ENCODE measurements at regions of chr2 and their contacts with region 1.

Region 1: GRCh38 chr2:156400706-156401678 is 35.2 kb upstream of the GPD2 start:
- DNase-seq: peak; percentile 67 to 93 (median 77)
- ATAC-seq: peak; percentile 81
- H3K4me3 ChIP-seq: peak overlapping the region; percentile 88
- H3K4me3 Mint-ChIP-seq: peak overlapping the region; percentile 92
- H3K27ac ChIP-seq: peak overlapping the region; percentile 87 to 90
- H3K27ac Mint-ChIP-seq: peak overlapping the region; percentile 99
- H3K4me1 ChIP-seq: peaks cover 18% of the 10 kb centered on the region
- H3K4me1 Mint-ChIP-seq: peaks cover 28% of the 10 kb centered on the region
- H3K27me3 ChIP-seq: no peaks in the 10 kb centered on the region
- H3K27me3 Mint-ChIP-seq: peaks cover 11% of the 10 kb centered on the region
- CTCF ChIP-seq: no peak

Region 2: DNA sequence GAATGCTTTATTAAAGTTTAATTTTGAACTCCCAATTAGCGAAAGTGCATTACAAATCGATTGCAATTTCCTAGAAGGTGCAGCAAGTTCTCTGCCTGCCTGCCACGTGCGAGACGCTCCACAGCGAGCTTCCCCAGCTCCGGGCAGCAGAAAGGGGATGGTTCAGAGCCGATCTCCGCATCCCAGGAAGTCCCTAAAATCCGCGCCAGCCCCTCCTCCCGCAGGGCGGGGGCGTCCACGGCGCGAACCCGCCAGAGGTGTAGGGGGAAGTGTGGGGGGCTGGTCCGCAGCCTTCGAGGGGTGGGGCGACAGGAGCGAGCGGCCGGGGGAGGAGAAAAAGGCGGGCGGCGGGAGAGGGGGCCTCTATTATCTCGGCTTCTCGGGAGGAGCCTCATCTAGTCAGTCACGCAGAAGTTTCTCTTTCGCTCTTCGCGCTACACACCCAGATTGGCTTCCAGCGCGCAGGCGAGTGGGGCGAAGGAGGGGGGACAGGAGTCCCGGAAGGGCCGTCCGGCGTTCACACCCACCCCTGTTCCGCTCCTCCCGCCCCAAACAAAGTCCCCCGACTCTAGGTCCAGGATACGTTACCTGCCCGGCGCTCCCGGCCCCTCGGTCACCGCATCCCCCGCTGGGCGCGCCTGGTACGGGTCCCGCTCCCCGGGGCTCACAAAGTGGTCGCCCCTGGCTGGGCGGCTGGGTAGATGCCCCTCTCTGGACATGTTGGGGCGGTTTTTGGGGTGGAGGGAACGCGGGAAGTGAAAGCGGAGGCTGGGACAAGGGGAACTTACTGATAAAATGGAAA is 59.3 kb before region 1 on chr2:
- CTCF ChIA-PET with region 1: no interaction called
- POLR2A ChIA-PET with region 1: interaction called, 107 read pairs
- intact Hi-C with region 1: loop called (anchors 1 to 2 kb)
- DNase-seq: peak; percentile 72 to 95 (median 81)
- ATAC-seq: peak; percentile 74
- H3K4me3 ChIP-seq: peak overlapping the region; percentile 87
- H3K4me3 Mint-ChIP-seq: peak overlapping the region; percentile 99
- H3K27ac ChIP-seq: peak overlapping the region; percentile 99
- H3K27ac Mint-ChIP-seq: peak overlapping the region; percentile 98
- H3K4me1 ChIP-seq: peaks cover 9% of the 10 kb centered on the region
- H3K4me1 Mint-ChIP-seq: peaks cover 49% of the 10 kb centered on the region
- H3K27me3 ChIP-seq: no peaks in the 10 kb centered on the region
- H3K27me3 Mint-ChIP-seq: no peaks in the 10 kb centered on the region
- CTCF ChIP-seq: no peak

Region 3: GRCh38 chr2:156435715-156436496 is 34.9 kb after region 1 on chr2 and contains the start of gene GPD2:
- CTCF ChIA-PET with region 1: no interaction called
- POLR2A ChIA-PET with region 1: interaction called, 18 read pairs
- intact Hi-C with region 1: loop called (anchors 1 to 2 kb)
- DNase-seq: peak; percentile 25 to 77 (median 46)
- ATAC-seq: peak; percentile 63
- H3K4me3 ChIP-seq: peak within 1 kb of the TSS; percentile 80
- H3K4me3 Mint-ChIP-seq: peak within 1 kb of the TSS; percentile 96
- H3K27ac ChIP-seq: peak within 1 kb of the TSS; percentile 33 to 69
- H3K27ac Mint-ChIP-seq: peak within 1 kb of the TSS; percentile 95
- H3K4me1 ChIP-seq: peaks cover 28% of the 10 kb centered on the region
- H3K4me1 Mint-ChIP-seq: peaks cover 33% of the 10 kb centered on the region
- H3K27me3 ChIP-seq: no peaks in the 10 kb centered on the region
- H3K27me3 Mint-ChIP-seq: no peaks in the 10 kb centered on the region
- CTCF ChIP-seq: no peak
- total RNA-seq, gene GPD2: 6.2 to 6.7 TPM

Region 4: DNA sequence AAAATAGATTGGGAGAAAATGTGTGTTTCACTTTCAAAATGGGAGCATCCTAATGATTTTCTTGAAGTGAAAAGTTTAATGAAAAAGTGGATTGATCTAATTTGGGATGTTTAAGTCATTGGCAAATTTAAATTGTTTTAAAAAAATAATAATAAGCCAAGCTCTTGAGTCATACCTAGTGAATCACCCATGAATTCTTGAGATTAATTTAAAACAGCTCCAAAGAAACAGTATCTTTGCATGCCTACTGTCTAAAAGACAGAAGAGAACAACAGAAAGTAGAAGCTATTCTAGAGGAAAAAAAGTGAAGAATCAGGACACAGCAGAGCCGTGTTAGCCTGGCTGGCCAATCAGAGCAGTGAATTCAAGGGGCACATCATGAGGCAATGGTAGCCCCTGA is 1220.0 kb after region 1 on chr2:
- CTCF ChIA-PET with region 1: no interaction called
- POLR2A ChIA-PET with region 1: no interaction called
- intact Hi-C with region 1: loop called in 1 of 2 experiments (anchors 5 kb)
- DNase-seq: no peak
- ATAC-seq: no peak
- H3K4me3 ChIP-seq: no peak overlapping the region
- H3K4me3 Mint-ChIP-seq: no peak overlapping the region
- H3K27ac ChIP-seq: no peak overlapping the region
- H3K27ac Mint-ChIP-seq: no peak overlapping the region
- H3K4me1 ChIP-seq: peaks cover 8% of the 10 kb centered on the region
- H3K4me1 Mint-ChIP-seq: peaks cover 20% of the 10 kb centered on the region
- H3K27me3 ChIP-seq: no peaks in the 10 kb centered on the region
- H3K27me3 Mint-ChIP-seq: no peaks in the 10 kb centered on the region
- CTCF ChIP-seq: no peak